ENCODE measurements at regions of chr1 and their contacts with region 1.

Region 1: DNA sequence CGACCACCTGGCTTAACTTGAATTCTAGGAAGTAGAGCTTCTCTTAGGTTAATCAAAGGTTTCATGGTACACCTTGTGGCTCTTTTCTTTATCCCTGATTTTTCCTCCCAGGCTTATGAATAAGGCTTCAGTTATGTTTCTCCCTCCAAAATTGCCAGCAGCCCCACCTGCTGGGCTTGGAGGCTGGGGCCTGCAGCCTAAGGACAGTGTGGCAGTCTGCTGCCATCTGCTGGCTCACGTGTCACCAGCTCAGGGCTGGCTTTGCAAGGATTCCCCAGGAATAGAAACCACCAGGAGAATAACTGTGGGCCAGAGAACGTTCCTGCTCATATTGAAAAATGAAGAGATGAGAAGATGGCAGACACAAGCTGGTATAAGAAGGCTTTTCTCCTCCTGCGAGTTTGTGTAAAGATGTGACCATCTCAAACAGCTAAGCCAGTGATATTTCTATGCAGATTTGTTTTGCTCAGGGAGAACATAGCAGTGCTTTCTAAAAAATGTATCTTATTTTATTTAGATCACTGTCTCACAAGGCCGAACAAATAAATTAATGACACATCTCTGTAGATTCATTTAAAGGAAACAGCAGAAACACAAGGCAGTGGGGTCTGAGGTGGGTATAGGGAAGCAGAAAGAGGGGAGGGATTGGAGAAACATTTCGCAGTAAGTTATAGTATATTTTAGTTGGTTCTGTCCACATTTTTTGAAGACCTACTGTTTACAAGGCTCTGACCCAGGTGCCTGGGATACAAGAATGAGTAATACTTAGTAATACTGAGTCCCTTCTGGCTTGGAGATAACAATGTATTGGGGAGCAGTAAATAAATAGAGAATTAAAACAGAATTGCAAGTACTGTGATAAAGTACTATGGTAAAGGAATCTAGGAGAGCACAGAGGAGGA is 291.1 kb upstream of the SGIP1 start:
- DNase-seq: peak; percentile 95

Region 2: DNA sequence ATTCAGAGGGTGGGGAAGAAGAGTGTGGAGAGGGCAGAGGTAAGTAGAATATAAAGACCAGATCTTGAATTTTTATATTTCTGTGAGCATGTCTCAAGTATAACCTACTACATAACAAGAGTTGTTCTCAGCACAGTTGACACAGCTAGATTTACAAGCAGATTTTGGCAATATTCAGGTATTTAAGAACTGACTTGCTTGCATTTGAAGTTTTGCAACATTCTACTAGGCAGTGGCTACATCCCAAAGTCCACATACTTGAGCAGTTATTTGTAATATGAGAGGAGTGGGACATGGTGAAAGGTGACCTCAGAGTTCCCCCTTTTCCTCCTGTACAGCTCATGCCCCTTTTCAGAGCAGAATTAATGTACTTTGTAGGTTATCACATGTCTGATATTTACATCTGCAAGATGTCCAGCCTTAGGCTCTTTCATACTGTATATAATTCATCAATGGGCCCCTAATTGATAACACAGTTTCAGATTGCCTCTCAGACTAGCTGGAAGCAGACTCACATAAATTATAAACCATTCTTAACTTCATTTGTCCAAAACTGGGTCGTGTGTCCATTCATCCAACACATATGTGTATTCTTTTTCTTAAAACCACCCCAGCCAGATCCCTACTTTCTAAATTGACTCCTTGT is 1634.8 kb before region 1 on chr1:
- intact Hi-C with region 1: loop called in 1 of 2 experiments (anchors 5 kb)
- DNase-seq: no peak

Region 3: GRCh38 chr1:65958561-65959350 is 284.1 kb before region 1 on chr1:
- intact Hi-C with region 1: loop called (anchors 5 to 10 kb)
- DNase-seq: no peak

Region 4: GRCh38 chr1:66207484-66207883 is 35.4 kb before region 1 on chr1:
- intact Hi-C with region 1: no loop called
- DNase-seq: no peak

Measured in posterior vena cava (tissue), 2 donors.